ENCODE measurements at regions of chr9 and their contacts with region 1.

Region 1: GRCh38 chr9:32706004-32706749 is 70.7 kb upstream of the TAF1L start:
- DNase-seq: no peak
- H3K4me3 ChIP-seq: no peak overlapping the region
- H3K27ac ChIP-seq: no peak overlapping the region
- H3K4me1 ChIP-seq: no peaks in the 10 kb centered on the region
- H3K27me3 ChIP-seq: no peaks in the 10 kb centered on the region
- CTCF ChIP-seq: no peak
- EP300 ChIP-seq: no peak
- POLR2A ChIP-seq: no peak

Region 2: DNA sequence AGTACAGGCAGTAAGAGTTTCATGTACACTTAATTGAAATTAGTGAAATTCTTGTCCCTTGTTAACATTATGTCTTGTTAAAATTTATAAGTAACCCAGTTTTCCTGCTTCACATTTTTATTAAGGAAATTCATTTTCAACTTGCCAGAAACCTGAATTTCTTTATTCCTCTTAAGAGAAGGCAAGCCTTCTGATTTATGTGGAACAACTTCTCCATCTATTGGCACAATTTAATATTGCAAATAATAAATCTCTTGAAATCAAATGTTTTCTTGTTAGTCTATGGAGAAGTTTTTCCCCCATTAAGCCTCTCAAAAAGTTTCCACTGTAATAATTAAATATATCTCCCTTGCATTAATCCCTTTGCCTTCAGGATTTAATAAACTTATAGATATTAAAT is 355.5 kb before region 1 on chr9:
- intact Hi-C with region 1: loop called in 1 of 4 experiments (anchors 5 kb)
- DNase-seq: no peak
- H3K4me3 ChIP-seq: no peak overlapping the region
- H3K27ac ChIP-seq: no peak overlapping the region
- H3K4me1 ChIP-seq: no peaks in the 10 kb centered on the region
- H3K27me3 ChIP-seq: no peaks in the 10 kb centered on the region
- CTCF ChIP-seq: no peak
- EP300 ChIP-seq: no peak
- POLR2A ChIP-seq: no peak

Measured in ovary (tissue), 10 donors.